ENCODE measurements at regions of chr1 and their contacts with region 1.

Region 1: DNA sequence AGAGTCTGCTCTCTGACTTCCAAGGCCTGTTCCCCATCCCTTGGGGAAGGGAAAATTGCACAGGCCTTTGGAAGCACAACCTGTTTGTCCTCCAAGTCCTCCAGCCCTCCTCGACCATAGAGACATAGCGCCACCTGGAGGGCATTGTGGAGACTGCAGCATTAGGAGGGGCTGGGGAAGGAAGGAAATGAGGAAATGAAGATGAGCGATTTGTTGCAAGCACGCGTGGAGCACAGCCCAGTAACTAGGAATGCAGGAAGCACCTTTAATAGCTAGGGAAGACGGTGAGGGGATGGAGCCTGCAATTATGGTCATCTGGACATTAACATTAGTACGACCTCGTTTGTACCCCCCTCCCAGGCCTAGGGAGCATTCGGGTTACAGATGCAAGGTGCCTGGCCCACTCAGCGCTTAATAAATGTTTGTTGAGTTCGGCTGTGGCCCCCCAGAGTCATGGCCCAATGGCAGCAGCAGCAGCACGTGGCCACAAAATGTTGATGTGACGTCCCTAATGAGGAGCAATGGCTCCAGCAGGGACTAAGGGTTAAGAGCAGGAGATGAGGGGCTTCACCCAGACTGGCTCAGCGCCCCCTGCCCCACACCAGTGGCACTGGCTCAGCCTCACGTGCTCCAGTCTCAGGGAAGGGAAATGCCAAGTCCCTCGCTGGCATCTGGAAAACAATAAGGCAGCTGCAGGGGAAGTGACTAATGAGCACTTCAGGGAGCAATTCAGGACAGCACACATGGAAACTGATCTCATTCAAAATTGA is 8.0 kb upstream of the CAMK2N1 start:
- DNase-seq: peak; percentile 91
- H3K4me3 ChIP-seq: no peak overlapping the region
- H3K27ac ChIP-seq: peak overlapping the region; percentile 94
- H3K4me1 ChIP-seq: peaks cover 42% of the 10 kb centered on the region
- H3K27me3 ChIP-seq: no peaks in the 10 kb centered on the region
- CTCF ChIP-seq: peak; percentile 98 to 99

Region 2: GRCh38 chr1:19918057-19918456 is 576.0 kb before region 1 on chr1:
- CTCF ChIA-PET with region 1: no interaction called
- dilution Hi-C with region 1: no loop called
- in situ Hi-C with region 1: loop called in 1 of 2 experiments (anchors 25 kb)
- intact Hi-C with region 1: loop called (anchors 1 kb)
- DNase-seq: peak; percentile 60
- H3K4me3 ChIP-seq: no peak overlapping the region
- H3K27ac ChIP-seq: no peak overlapping the region
- H3K4me1 ChIP-seq: no peaks in the 10 kb centered on the region
- H3K27me3 ChIP-seq: no peaks in the 10 kb centered on the region
- CTCF ChIP-seq: peak; percentile 90 to 95

Region 3: DNA sequence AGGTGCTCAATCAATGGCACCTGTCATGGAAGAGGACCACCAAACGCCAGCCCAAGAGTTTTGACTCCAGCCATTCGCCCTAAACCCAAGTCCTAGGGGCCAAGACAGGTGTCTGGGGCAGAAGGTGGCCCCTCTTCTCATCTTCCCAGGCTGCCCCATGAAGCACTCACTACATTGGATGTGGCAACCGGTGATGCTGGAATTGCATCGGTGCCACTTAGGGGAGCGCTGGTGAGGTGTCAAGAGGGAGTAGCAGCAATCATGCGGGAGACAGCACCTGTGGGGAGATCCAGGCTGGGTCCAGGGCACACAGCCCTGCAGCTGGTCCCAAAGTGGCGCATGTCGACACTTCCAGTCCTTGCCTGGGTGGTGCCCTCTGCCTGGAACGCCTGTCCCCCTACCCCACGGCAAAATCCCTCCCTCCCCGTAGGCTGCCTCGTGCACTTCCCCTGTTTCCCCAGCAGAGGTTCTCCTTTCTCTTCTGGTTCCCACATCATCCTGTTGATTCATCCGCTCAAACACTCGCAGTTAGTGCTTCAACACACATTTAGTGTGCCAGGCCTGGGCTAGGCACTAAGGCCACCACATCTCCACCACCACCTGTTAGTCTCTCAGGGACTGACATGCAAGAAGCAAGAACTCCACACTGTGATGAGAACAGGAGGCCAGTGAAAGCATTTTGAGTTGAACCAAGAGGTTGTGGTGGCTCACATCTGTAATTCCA is 393.2 kb before region 1 on chr1:
- CTCF ChIA-PET with region 1: interaction called, 4 read pairs
- dilution Hi-C with region 1: no loop called
- in situ Hi-C with region 1: loop called in 1 of 2 experiments (anchors 10 kb)
- intact Hi-C with region 1: loop called (anchors 1 kb)
- DNase-seq: peak; percentile 57
- H3K4me3 ChIP-seq: no peak overlapping the region
- H3K27ac ChIP-seq: no peak overlapping the region
- H3K4me1 ChIP-seq: peaks cover 12% of the 10 kb centered on the region
- H3K27me3 ChIP-seq: no peaks in the 10 kb centered on the region
- CTCF ChIP-seq: peak; percentile 86 to 93

Region 4: DNA sequence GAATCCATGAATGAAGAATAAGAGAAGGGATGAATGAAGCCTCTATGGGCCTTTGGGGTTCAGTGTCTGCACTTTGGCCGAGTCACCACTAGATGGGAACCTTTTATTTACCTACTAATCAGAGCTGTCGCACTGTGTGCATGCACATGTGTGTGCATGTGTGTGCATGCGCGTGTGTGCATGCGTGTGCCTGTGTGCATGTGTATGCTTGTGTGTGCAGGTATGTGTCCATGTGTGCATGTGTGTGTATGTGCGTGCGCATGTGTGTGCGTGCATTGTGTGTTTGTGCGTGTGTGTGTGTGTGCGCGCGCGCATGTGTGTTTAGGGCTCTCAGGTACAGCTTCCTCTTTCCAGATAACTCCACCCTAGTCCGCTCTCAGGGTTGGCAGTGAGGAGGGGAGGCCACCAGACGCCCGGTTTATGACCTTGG is 328.5 kb before region 1 on chr1:
- CTCF ChIA-PET with region 1: interaction called, 5 read pairs
- dilution Hi-C with region 1: no loop called
- in situ Hi-C with region 1: no loop called
- intact Hi-C with region 1: loop called (anchors 1 kb)
- DNase-seq: peak; percentile 52
- H3K4me3 ChIP-seq: no peak overlapping the region
- H3K27ac ChIP-seq: no peak overlapping the region
- H3K4me1 ChIP-seq: peaks cover 29% of the 10 kb centered on the region
- H3K27me3 ChIP-seq: no peaks in the 10 kb centered on the region
- CTCF ChIP-seq: peak; percentile 55 to 64

Region 5: DNA sequence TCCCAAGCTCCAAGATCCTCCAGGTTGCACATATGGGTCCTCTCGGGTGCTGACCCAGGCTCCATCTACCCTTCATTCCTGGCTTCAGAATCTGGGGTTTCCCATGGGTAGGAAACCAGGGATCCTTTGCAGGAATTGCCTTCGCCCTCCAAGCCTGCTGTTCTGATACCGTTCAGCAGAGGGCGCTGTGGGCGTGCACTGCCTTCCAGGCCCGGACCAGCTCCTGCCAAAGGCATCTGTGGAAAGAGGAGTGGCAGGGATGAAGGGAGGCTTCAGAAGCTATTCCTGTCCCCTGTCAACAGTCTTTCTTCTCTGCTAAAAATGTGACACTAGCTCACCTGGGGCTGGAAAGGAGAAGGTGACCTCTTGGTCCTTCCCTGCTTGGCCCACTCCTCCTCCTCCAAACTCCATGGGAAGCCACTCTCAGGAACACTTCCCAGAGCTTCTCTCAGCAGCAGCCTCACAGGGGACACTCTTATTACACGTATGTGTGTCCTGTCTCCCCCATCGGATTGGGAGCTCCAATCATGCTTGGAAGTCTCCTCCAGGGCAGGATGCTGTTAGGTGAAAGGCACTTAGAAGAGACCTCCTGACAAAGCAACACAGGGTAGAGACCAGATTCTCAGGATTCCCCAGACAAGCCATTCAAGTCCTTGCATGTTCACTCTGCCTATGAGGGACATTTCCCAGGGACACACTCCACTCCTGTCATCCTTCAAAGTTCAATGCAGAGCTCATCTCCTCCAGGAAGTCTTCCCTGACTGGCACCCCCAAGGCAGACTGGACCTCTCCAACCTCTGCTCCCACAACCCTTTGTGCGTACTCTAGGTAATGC is 132.0 kb before region 1 on chr1:
- CTCF ChIA-PET with region 1: interaction called, 6 read pairs
- dilution Hi-C with region 1: no loop called
- in situ Hi-C with region 1: loop called in 1 of 2 experiments (anchors 10 kb)
- intact Hi-C with region 1: loop called (anchors 1 kb)
- DNase-seq: peak; percentile 55
- H3K4me3 ChIP-seq: no peak overlapping the region
- H3K27ac ChIP-seq: no peak overlapping the region
- H3K4me1 ChIP-seq: peaks cover 41% of the 10 kb centered on the region
- H3K27me3 ChIP-seq: peaks cover 5% of the 10 kb centered on the region
- CTCF ChIP-seq: peak; percentile 95 to 98

Region 6: GRCh38 chr1:20430355-20431175 is 63.5 kb before region 1 on chr1:
- CTCF ChIA-PET with region 1: interaction called, 3 read pairs
- dilution Hi-C with region 1: no loop called
- in situ Hi-C with region 1: no loop called
- intact Hi-C with region 1: loop called (anchors 1 kb)
- DNase-seq: no peak
- H3K4me3 ChIP-seq: no peak overlapping the region
- H3K27ac ChIP-seq: no peak overlapping the region
- H3K4me1 ChIP-seq: peaks cover 14% of the 10 kb centered on the region
- H3K27me3 ChIP-seq: no peaks in the 10 kb centered on the region
- CTCF ChIP-seq: peak; percentile 80 to 89

Region 7: DNA sequence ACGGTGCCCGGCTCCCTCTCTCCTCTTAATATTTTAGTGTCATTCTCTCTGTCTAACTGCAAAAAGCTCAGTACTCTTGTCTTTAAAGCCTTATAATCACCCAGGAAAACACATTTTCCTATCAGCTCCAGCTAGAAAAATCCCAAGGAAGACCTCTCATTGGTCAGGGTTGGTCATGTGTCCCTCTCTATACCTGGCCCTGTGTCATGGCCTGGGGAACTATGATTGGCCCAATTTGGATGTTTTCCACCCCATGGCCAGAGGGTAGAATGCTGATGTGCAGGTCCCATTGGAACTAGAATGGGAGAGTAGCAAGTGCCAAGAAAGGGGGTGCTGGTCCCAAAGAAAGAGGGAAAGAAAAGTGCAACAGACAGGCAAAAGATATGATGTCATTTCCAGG is 35.3 kb before region 1 on chr1:
- CTCF ChIA-PET with region 1: no interaction called
- dilution Hi-C with region 1: no loop called
- in situ Hi-C with region 1: no loop called
- intact Hi-C with region 1: no loop called
- DNase-seq: no peak
- H3K4me3 ChIP-seq: no peak overlapping the region
- H3K27ac ChIP-seq: no peak overlapping the region
- H3K4me1 ChIP-seq: no peaks in the 10 kb centered on the region
- H3K27me3 ChIP-seq: no peaks in the 10 kb centered on the region
- CTCF ChIP-seq: no peak

Region 8: GRCh38 chr1:20469406-20470076 is 24.5 kb before region 1 on chr1:
- CTCF ChIA-PET with region 1: no interaction called
- dilution Hi-C with region 1: no loop called
- in situ Hi-C with region 1: no loop called
- intact Hi-C with region 1: loop called (anchors 1 kb)
- DNase-seq: no peak
- H3K4me3 ChIP-seq: no peak overlapping the region
- H3K27ac ChIP-seq: no peak overlapping the region
- H3K4me1 ChIP-seq: no peaks in the 10 kb centered on the region
- H3K27me3 ChIP-seq: no peaks in the 10 kb centered on the region
- CTCF ChIP-seq: peak in 1 of 2 donors; percentile 3